Ovary (tissue), 10 donors: ENCODE measurements at regions of chr21 and their contacts with region 1.

Region 1: GRCh38 chr21:32257962-32258785 is 20.7 kb downstream of the MIS18A start:
- DNase-seq: peak; percentile 58 to 80 (median 73)
- H3K4me3 ChIP-seq: no peak overlapping the region
- H3K27ac ChIP-seq: no peak overlapping the region
- H3K4me1 ChIP-seq: no peaks in the 10 kb centered on the region
- H3K27me3 ChIP-seq: no peaks in the 10 kb centered on the region
- CTCF ChIP-seq: peak; percentile 28 to 77 (median 68)
- EP300 ChIP-seq: no peak
- POLR2A ChIP-seq: no peak

Region 2: GRCh38 chr21:31781737-31782136 is 476.4 kb before region 1 on chr21:
- intact Hi-C with region 1: loop called in 2 of 4 experiments (anchors 5 kb)
- DNase-seq: peak in 4 of 5 donors; percentile 22 to 69 (median 33)
- H3K4me3 ChIP-seq: no peak overlapping the region
- H3K27ac ChIP-seq: no peak overlapping the region
- H3K4me1 ChIP-seq: peaks cover 6% of the 10 kb centered on the region
- H3K27me3 ChIP-seq: no peaks in the 10 kb centered on the region
- CTCF ChIP-seq: no peak
- EP300 ChIP-seq: no peak
- POLR2A ChIP-seq: no peak

Region 3: DNA sequence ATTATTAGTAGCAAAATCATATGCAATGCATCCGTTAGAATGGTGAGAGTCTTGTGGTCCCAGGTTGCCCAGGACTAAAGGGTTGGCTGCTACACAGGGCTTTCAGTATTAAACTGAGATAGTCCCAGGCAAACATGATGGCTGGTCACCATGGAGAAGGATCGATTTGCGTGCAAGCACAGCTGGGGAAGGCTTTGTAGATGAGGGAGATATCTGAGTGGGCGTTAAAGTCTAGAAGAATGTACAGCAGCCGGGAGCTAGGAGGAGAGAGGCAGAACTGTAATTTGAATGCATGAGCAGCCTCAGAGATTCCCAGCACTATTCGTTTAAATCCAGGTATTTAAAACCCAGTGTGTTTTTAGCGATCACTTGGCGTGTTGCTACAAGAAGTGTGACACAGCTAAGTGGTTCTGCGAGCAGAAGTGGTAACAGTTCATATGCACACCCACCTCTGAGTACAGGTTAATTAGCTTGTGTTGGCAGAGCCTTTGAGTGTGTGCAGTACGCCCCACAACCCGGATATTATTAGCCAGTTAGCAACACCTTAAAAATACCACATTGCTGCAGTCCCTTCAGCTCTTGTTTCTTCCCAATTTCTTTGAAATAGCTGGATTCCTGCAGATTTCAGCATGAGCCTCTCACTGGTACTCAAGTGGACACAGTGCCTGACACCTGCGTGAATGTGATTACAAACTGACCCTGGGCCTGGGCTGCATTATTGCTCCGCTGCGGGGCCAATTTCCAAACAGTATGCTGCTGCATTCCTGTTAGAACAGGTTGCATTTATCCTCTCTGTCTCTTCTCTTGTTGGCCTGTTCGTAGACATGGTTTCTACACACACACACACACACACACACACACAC is 459.1 kb before region 1 on chr21:
- intact Hi-C with region 1: loop called in 1 of 4 experiments (anchors 5 kb)
- DNase-seq: no peak
- H3K4me3 ChIP-seq: no peak overlapping the region
- H3K27ac ChIP-seq: no peak overlapping the region
- H3K4me1 ChIP-seq: no peaks in the 10 kb centered on the region
- H3K27me3 ChIP-seq: no peaks in the 10 kb centered on the region
- CTCF ChIP-seq: no peak
- EP300 ChIP-seq: no peak
- POLR2A ChIP-seq: no peak

Region 4: GRCh38 chr21:31866077-31866511 is 392.1 kb before region 1 on chr21:
- intact Hi-C with region 1: loop called (anchors 5 to 10 kb)
- DNase-seq: peak; percentile 76 to 91 (median 85)
- H3K4me3 ChIP-seq: no peak overlapping the region
- H3K27ac ChIP-seq: no peak overlapping the region
- H3K4me1 ChIP-seq: peaks cover 2% of the 10 kb centered on the region
- H3K27me3 ChIP-seq: no peaks in the 10 kb centered on the region
- CTCF ChIP-seq: peak; percentile 46 to 81 (median 68)
- EP300 ChIP-seq: no peak
- POLR2A ChIP-seq: no peak